Mammary epithelial cell (primary cell): ENCODE measurements at regions of chr2 and their contacts with region 1.

Region 1: DNA sequence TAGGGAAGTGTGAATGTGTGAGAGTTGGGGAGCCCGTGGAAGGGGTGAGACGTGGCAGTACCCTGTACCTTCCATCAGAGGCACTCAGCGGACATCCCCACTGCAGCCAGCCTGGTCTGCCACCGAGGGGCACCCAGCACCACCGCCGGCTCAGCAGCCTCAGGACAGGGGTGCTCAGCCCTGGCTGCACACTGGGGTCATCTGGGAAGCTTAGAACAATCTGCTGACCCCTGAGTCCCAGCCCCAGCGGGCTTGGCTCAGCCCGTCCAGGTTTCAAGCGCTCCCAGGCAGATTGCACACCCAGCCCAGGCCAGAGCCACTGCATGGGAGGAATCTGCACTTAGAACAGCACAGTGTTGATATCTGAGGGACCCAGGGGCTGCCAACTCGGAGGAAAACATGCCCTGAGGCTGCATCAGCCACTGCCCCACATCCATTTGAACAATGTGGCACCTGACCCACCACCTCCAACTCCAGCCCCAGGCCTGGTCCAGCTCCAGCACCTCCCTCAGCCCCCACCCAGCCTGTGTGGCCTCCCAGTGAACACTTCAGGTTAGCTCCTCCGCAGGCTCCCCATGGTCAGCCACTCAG is 147.1 kb upstream of the OTOS start:
- DNase-seq: no peak
- H3K4me3 ChIP-seq: no peak overlapping the region
- H3K27ac ChIP-seq: no peak overlapping the region
- H3K4me1 ChIP-seq: no peaks in the 10 kb centered on the region
- H3K27me3 ChIP-seq: peaks cover 2% of the 10 kb centered on the region
- CTCF ChIP-seq: no peak

Region 2: DNA sequence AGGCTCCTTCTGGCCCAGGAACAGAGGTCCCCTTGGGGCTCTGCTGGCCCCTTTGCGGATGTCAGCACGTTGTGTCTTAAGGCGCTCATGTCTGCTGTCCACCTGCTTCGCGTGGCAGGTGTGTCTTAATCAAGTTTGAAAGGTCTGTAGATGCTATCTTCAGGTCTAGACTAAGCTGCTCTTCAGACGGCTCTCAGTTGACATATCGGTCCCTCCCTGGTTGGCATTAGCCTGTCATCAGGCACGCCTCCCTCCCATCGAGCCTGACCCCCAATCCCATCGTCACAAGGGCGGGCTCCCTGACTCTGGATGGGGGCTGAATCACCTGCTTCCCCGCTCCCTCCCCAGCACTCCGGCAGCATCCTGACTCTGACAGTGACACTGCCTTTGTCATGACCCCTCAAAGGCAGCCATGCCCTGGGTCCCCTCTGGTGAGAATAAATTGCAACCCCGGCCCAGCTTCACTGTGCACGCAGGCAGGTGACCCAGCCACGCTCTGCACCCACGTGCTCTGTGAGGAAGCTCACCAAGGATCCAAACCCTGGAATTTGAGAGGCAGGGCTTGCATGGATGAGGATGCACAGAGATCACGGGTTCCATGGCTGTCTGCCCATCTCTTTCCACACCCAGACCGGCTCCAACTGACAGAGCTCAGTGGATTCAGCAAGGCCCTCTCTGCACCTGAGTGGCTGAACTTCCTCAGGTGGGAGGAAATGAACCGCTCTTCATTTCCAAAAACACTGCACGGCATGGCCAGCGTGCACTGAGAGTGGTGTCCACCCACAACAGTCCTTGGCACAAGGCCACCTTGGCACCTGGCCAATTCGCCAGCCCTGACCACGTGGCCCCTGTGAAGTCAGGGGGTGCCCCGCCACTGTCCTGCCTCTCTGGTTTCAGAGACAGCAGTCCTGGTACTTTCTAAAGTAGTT is 37.7 kb after region 1 on chr2:
- CTCF ChIA-PET with region 1: no interaction called
- dilution Hi-C with region 1: loop called (anchors 5 kb)
- in situ Hi-C with region 1: no loop called
- intact Hi-C with region 1: no loop called
- DNase-seq: peak; percentile 37
- H3K4me3 ChIP-seq: no peak overlapping the region
- H3K27ac ChIP-seq: no peak overlapping the region
- H3K4me1 ChIP-seq: peaks cover 37% of the 10 kb centered on the region
- H3K27me3 ChIP-seq: no peaks in the 10 kb centered on the region
- CTCF ChIP-seq: no peak

Region 3: DNA sequence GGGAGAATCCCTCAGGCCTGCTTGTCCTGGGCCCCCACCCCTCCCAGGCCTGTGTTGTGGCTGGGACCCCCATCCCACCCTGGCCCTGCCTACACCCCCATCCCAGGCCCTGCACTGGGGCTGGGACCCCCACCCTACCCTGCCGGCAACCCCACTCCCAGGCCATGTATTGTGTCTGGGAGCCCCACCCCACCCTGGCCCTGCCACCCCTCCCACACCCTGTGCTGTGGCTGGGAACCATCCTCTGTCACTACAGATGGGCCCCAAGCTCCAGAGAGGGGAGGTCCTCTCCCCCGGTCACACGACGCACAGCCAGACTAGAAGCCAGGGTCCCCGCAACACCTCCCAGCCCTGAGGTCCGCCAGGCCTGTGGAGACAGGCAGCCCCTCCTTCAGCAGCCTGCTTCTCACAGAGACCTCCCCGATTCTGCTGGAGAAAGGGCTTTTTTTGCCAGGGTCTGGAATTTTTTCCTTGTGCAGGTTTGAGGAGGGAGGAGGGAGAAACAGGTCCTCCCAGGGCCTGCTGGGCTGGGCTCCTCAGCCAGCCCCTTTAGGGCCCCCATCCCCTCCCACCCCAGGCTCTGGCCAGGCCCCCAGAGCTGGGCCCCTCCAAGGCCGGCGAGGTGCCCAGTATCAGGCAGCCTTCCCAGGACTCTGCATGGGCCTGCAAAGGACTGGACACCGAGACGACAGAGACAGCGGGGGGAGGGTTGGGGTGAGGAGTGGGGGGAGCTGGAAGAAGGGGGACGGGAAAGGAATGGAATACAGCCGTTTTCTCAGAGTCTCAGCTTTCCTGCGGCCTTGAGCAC is 504.4 kb after region 1 on chr2:
- CTCF ChIA-PET with region 1: no interaction called
- dilution Hi-C with region 1: no loop called
- in situ Hi-C with region 1: no loop called
- intact Hi-C with region 1: no loop called
- DNase-seq: no peak
- H3K4me3 ChIP-seq: no peak overlapping the region
- H3K27ac ChIP-seq: no peak overlapping the region
- H3K4me1 ChIP-seq: no peaks in the 10 kb centered on the region
- H3K27me3 ChIP-seq: peaks cover 3% of the 10 kb centered on the region
- CTCF ChIP-seq: no peak